ENCODE measurements at regions of chr9 and their contacts with region 1.

Region 1: GRCh38 chr9:87959916-87960581 is 14.3 kb downstream of the CDK20 start:
- DNase-seq: peak; percentile 62
- H3K4me3 ChIP-seq: no peak overlapping the region
- H3K27ac ChIP-seq: peak overlapping the region; percentile 50
- H3K4me1 ChIP-seq: no peaks in the 10 kb centered on the region
- H3K27me3 ChIP-seq: no peaks in the 10 kb centered on the region
- CTCF ChIP-seq: no peak

Region 2: GRCh38 chr9:88041447-88041846 is 81.4 kb after region 1 on chr9:
- intact Hi-C with region 1: loop called (anchors 5 kb)
- DNase-seq: no peak
- H3K4me3 ChIP-seq: no peak overlapping the region
- H3K27ac ChIP-seq: no peak overlapping the region
- H3K4me1 ChIP-seq: no peaks in the 10 kb centered on the region
- H3K27me3 ChIP-seq: no peaks in the 10 kb centered on the region
- CTCF ChIP-seq: no peak

Region 3: DNA sequence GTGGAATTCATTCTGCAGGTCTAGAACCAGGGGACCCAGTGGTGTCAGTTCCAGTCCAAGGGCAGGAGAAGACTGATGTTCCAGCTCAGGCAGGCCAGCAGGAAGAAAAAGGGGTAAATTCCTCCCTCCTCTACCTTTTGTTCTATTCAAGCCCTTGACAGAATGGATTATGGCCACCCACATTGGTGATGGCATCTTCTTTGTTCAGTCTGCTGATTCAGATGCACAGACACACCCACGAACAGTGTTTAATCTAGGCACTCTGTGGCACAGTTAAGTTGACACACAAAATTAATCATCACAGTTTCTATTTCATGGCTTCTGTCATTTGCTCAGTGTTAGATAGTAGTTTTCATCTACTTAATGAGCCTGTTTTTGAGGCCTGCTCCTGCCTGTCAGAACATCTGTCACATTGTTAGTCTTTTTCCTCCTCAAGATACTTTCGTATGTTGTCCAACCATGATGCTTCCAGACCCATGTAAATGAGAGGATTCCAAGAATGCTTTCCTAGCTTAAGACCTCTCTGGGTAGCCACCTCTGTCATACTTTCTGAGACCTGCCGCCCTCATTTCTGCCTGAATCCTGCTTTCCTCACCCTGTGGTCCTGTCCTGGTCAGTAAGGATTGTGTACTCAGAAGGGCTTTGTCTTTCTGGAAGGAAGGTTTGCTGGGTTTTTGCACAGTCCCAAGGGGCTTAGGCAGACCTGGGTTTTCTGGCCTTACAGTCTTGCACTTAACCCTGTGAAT is 500.7 kb after region 1 on chr9:
- intact Hi-C with region 1: no loop called
- DNase-seq: no peak
- H3K4me3 ChIP-seq: no peak overlapping the region
- H3K27ac ChIP-seq: no peak overlapping the region
- H3K4me1 ChIP-seq: no peaks in the 10 kb centered on the region
- H3K27me3 ChIP-seq: no peaks in the 10 kb centered on the region
- CTCF ChIP-seq: no peak

Region 4: GRCh38 chr9:89234205-89235067 is 1274.4 kb after region 1 on chr9:
- intact Hi-C with region 1: no loop called
- DNase-seq: no peak
- H3K4me3 ChIP-seq: no peak overlapping the region
- H3K27ac ChIP-seq: no peak overlapping the region
- H3K4me1 ChIP-seq: no peaks in the 10 kb centered on the region
- H3K27me3 ChIP-seq: peaks cover 4% of the 10 kb centered on the region
- CTCF ChIP-seq: no peak

Measured in colonic mucosa (tissue), 4 donors.